ENCODE measurements at regions of chr1 and their contacts with region 1.

Region 1: DNA sequence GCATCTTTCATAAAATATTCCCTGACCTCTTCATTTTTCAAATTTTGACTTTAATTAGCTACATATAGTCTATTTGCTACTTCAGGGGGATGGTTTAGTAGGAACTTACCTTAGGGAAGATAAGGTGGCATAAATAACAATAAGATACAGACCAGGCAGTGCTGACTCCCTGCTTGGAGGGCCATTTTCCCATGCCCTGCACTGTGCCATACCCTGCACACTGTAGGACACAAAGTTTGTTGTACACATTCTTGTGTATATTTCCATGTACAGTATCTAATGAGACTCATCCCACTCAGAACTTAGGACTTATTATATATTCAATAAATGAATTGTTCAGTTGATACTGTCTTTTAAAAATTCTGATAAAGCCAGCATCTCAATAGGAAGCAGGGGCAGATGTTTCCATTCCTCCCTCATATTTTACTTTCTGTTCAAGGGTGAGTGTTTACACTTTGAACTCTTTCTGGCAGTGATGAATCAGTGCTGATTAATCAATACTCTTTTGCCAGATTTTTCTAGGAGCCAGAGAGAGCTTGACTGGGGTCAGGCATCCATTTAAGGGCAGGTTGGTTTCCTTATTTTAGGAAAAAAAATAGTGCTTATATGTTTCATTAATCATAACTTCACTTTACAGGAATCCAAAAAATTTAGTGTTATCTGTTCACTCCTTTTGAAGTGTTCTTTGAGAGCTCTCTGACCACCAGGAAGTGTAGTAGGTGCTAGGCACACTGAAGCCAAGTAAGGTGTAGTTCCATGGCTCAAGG is 30.6 kb downstream of the MPZL1 start:
- DNase-seq: peak; percentile 49
- H3K4me3 ChIP-seq: no peak overlapping the region
- H3K27ac ChIP-seq: peak overlapping the region; percentile 62
- H3K4me1 ChIP-seq: peaks cover 37% of the 10 kb centered on the region
- H3K27me3 ChIP-seq: no peaks in the 10 kb centered on the region
- CTCF ChIP-seq: no peak

Region 2: DNA sequence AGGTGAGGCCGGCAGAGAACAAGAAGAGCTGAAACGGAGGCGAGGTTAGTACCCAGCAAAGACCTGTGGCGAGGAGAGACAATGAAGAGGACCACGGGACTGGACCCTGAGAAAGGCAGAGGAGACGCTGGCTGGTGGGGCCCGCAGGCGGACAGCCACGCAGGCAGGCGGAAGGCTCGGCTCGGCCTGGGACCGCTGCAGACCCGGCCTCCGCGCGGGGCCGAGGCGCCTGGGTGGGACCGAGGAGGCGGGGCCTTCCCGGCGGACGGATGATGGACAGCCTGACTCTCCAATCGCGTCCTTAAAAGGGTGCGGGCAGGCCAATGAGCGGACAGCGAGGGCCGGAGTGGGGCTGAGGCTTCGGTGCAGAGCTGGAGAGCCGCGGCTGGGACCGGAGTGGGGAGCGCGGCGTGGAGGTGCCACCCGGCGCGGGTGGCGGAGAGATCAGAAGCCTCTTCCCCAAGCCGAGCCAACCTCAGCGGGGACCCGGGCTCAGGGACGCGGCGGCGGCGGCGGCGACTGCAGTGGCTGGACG is 30.7 kb before region 1 on chr1 and contains the start of gene MPZL1:
- CTCF ChIA-PET with region 1: no interaction called
- dilution Hi-C with region 1: no loop called
- in situ Hi-C with region 1: no loop called
- intact Hi-C with region 1: loop called (anchors 2 kb)
- DNase-seq: peak; percentile 91
- H3K4me3 ChIP-seq: peak within 1 kb of the TSS; percentile 88 to 98 (median 94)
- H3K27ac ChIP-seq: peak within 1 kb of the TSS; percentile 66
- H3K4me1 ChIP-seq: peaks cover 42% of the 10 kb centered on the region
- H3K27me3 ChIP-seq: no peaks in the 10 kb centered on the region
- CTCF ChIP-seq: no peak
- total RNA-seq, gene MPZL1: 148 to 227 TPM